Lower leg skin (tissue), 4 donors: ENCODE measurements at regions of chr3 and their contacts with region 1.

Region 1: DNA sequence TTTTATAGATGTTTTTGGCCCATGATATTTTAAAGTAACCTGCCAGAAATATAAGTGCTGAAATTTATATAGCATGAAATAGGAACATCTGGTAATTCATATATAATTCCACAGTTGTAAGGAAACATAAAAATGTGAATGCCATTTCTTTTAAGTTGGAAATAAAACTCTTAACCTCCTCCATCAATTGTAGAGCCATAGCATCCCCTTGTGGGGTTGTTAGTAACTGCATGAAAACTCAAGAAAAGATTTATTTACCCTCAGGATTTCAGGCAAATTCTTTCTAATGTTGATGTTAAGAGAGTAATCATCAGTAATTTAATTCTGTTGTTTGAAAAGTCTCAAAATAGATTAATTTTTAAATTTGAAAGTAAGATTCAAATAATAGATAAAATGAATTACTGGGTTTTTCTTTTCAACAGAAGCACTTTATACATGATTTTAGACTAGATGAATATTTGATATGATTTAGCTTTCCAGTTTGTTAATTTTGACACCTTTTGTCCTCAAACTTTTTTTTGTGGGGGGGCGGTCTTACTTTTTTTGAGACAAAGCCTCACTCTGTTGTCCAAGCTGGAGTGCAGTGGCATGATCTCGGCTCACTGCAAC is 74.7 kb downstream of the RASA2 start:
- DNase-seq: peak in 1 of 2 donors; percentile 40
- H3K4me3 ChIP-seq: no peak overlapping the region
- CTCF ChIP-seq: peak in 2 of 3 donors; percentile 55 to 93
- POLR2A ChIP-seq: no peak

Region 2: DNA sequence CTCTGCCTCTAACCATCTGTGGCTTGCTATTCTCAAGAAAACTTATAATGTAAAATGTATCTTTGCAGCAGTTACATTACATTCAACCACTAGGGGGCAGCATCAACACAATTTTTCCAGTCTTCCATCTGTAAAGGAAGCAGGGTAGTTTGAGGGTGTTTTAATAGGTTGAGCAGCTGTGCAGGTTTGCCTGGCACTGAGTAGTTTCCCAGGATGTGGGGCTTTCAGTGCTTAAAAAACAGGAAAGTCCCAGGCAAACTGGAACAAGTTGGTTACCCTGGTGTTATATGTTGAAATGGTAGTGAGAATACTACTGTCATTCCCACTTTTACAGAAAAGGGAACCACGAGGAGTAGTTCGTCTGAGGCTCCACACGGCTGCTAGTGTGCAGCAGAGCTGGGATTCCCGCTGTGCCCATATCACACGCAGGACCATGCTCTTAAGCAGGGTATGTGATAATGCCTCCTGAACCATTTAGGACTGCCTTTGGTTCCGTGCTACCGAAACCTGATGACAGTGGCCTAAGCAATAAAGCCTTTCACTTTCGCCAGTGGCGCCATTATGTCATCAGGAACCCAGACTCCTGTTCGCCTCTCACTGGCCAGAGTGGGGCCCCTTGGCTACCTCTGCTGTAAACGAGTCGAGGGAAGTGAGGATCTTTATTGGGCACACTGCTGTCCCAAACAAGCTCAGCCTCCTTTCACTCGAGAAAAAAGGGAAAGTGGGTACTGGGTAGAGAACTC is 257.9 kb before region 1 on chr3:
- intact Hi-C with region 1: loop called (anchors 10 kb)
- DNase-seq: peak; percentile 57 to 73
- H3K4me3 ChIP-seq: no peak overlapping the region
- CTCF ChIP-seq: no peak
- POLR2A ChIP-seq: no peak

Region 3: DNA sequence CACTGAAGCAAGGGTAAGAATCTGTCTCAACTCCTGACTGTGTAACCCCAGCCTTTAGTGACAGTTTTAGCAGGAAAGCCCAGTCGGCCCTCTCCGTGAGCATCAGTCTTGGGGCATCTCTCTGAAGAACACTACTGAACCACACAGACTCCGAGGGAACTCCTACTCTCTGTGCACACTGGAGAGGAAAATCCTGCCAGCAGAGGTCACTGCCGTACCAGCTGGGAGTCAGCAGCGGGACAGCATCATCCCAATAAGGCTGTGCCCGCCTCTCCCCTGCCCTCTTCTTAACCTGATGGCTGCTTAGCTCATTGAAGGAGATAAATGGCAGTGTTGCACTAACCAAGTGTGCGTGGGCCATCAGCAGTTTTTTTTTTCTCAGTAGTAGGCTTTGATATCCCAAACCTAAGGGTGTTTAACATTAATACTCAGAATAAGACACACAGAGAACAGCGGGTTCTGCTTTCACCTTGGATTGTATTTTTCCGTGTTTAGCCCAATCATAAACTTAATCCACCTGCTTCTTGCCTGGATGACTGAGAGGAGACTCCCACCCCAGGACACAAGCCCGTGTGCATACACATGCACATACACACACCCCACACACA is 101.3 kb before region 1 on chr3:
- intact Hi-C with region 1: loop called (anchors 5 kb)
- DNase-seq: peak; percentile 89 to 97
- H3K4me3 ChIP-seq: no peak overlapping the region
- CTCF ChIP-seq: peak in 1 of 3 donors; percentile 66
- POLR2A ChIP-seq: no peak